ENCODE measurements at regions of chr20 and their contacts with region 1.

Region 1: DNA sequence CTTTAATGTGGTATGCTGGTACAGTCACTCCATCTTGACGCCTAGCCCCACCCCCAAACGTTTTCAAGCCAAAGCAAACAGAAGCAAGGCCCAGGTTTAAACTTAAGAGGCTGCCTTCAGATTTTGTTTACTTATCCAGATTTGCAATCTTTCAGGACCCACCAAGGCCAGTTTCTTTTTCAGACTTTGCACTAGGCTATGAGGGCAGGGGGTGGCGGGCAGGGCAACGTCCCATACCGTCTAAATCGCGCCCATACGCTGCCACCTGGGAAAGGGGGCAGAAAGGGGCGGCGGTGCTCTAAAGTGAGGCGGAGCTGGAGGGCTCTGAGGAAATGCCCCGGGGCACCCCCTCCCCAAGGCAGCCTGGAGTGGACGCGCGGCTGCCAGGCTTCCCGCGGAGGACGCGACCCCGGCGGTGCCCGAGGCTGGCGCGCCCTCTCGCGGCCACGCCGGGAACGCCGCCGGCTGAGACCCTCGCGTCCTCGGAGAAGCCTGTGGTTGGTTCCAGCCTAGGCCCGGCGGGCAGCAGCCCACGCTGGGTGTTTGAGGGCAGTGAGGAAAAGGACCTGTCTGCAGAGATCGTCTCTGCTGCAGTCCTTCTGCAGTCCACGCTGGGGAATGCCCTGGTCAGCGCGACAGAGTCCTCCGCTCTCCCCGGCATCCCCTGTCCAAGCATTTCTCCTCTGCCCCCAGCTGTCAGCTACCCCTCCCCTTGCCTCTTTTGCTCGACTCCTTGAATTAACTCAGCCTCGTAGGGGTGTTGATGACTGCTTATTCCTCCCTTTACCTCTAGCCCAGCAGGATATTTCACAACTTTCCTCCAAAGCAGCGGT is 129.2 kb upstream of the PRND start:
- DNase-seq: peak in 2 of 3 donors; percentile 51 to 56
- ATAC-seq: peak; percentile 90 to 96 (median 91)
- H3K4me3 ChIP-seq: peak overlapping the region; percentile 21 to 43 (median 35)
- H3K27ac ChIP-seq: no peak overlapping the region
- H3K4me1 ChIP-seq: peaks cover 0 to 10% (median 2%) of the 10 kb centered on the region in 4 donors
- H3K27me3 ChIP-seq: no peaks in the 10 kb centered on the region
- CTCF ChIP-seq: peak; percentile 85 to 97 (median 94)
- POLR2A ChIP-seq: no peak

Region 2: DNA sequence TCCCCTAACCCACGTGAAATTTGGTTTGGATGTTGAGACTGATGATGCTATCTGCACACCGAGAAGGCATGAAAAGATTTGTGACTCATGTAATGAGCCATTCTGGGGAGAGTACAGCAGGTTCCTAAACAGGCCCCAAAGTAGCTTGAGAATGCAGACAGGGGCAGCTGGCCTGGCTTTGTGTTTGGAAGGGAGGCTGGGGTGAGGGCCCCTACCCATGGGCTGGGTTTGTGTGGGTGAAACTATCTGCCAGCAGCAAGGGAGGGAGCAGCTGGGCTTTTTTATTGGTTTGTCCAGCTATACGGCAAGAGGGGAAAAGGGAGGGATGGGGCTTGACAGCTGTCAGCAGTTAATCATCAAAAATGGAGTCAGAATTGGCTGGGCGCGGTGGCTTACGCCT is 490.2 kb before region 1 on chr20:
- intact Hi-C with region 1: loop called in 1 of 2 experiments (anchors 5 kb)
- DNase-seq: no peak
- ATAC-seq: no peak
- H3K4me3 ChIP-seq: no peak overlapping the region
- H3K27ac ChIP-seq: no peak overlapping the region
- H3K4me1 ChIP-seq: no peaks in the 10 kb centered on the region
- H3K27me3 ChIP-seq: no peaks in the 10 kb centered on the region
- CTCF ChIP-seq: no peak
- POLR2A ChIP-seq: no peak

Region 3: GRCh38 chr20:4252005-4252404 is 340.5 kb before region 1 on chr20:
- intact Hi-C with region 1: loop called in 1 of 2 experiments (anchors 5 kb)
- DNase-seq: no peak
- ATAC-seq: no peak
- H3K4me3 ChIP-seq: no peak overlapping the region
- H3K27ac ChIP-seq: no peak overlapping the region
- H3K4me1 ChIP-seq: peaks cover 0 to 4% (median 0%) of the 10 kb centered on the region in 4 donors
- H3K27me3 ChIP-seq: peaks cover 0 to 15% of the 10 kb centered on the region in 2 donors
- CTCF ChIP-seq: no peak
- POLR2A ChIP-seq: no peak

Region 4: DNA sequence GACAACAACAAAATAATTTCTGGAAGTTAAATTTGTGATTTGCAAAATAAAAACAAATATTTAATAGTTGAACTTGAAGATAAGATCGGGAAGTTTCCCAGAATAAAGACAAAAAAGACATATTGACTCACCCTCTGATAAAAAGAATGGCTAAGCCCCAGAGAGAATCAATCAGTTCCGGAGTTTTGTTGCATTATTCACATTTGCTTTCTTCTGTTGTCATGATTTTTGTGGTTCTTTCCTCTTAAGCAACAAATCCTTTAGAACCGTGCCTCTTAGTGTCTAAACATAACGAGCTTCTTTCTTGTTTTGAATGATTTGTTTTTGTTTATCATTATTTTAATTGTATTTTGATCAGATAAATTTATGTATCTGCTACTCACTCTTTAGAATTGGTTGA is 208.6 kb before region 1 on chr20:
- intact Hi-C with region 1: no loop called
- DNase-seq: no peak
- ATAC-seq: peak in 1 of 4 donors; percentile 34
- H3K4me3 ChIP-seq: no peak overlapping the region
- H3K27ac ChIP-seq: no peak overlapping the region
- H3K4me1 ChIP-seq: no peaks in the 10 kb centered on the region
- H3K27me3 ChIP-seq: no peaks in the 10 kb centered on the region
- CTCF ChIP-seq: no peak
- POLR2A ChIP-seq: no peak

Region 5: DNA sequence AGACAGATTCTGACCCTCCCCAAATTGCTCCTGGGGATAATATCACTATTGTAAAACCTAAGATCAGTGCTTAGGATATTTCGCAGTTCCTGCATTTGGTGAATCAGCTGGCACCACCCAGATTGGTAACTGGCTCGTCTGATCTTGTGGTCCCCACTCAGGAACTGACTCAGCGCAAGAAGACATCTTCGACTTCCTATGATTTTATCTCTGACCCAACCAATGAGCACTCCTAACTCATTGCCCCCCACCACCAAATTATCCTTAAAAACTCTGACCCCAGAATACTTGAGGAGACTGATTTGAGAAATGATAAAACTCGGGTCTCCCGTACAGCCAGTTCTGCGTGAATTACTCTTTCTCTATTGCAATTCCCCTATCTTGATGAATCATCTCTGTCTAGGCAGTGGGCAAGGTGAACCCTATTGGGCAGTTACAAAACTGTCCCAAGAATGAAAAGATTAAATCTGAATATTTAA is 73.5 kb after region 1 on chr20:
- intact Hi-C with region 1: no loop called
- DNase-seq: no peak
- ATAC-seq: peak in 2 of 4 donors; percentile 45 to 52
- H3K4me3 ChIP-seq: no peak overlapping the region
- H3K27ac ChIP-seq: no peak overlapping the region
- H3K4me1 ChIP-seq: no peaks in the 10 kb centered on the region
- H3K27me3 ChIP-seq: no peaks in the 10 kb centered on the region
- CTCF ChIP-seq: no peak
- POLR2A ChIP-seq: no peak